Posterior vena cava (tissue), 2 donors: ENCODE measurements at regions of chr2 and their contacts with region 1.

Region 1: GRCh38 chr2:53640466-53640865 is 127.1 kb upstream of the CHAC2 start:
- DNase-seq: no peak

Region 2: DNA sequence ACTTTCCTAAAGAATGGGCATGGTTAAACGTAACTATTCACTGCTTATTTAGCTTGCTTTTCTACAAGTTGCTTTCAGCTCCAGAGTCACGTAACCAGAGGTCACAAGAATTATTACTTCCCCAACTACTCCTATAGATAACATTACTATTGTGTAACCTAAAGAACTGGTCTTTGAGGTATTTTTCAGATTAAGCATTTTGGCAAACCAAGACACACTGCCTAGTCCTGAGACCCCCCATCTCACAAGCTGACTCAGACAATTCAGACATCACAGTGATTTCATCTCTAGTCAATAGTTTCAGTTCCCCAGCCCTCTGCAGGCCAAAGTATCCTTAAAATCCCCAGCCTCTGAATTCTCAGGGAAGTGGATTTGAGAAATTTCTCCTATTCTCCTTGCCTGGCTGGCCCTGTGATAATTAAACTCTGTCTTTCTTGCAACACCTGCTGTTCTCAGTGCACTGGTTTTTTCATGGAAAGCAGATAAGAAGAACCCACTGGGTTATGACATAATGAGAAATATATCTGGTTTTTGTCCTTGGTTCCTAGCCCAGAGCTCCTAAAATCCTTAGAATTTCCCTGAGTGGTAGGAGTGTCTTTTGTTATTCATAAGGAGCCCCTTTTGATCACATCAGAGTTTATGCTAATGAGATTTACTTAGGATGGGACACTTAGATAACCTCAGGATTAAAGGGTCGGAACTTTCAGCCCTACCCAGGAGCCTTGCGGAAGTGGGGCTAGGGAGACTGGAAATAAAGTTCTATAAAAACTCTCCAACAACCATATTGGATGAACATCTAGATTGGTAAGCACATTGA is 1183.7 kb before region 1 on chr2:
- intact Hi-C with region 1: no loop called
- DNase-seq: no peak

Region 3: DNA sequence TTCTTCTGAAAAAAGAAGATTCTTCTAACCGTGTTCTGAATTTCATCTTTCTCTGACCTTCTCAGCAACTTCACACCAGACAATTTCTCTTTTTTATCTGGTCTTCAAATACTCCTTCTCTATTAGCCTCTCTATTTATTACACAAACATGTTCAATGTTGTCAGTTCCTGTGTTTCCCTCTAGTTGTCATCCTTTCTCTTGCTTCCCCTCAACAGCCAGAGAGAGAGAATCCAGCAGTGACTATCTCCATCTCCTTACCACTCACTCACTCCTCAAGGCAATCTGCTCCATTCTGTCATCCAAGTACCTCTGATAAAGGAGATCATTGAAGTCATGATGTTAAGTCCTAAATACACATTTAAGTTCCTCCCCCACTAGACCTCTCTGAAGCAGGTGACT is 364.7 kb before region 1 on chr2:
- intact Hi-C with region 1: no loop called
- DNase-seq: no peak

Region 4: DNA sequence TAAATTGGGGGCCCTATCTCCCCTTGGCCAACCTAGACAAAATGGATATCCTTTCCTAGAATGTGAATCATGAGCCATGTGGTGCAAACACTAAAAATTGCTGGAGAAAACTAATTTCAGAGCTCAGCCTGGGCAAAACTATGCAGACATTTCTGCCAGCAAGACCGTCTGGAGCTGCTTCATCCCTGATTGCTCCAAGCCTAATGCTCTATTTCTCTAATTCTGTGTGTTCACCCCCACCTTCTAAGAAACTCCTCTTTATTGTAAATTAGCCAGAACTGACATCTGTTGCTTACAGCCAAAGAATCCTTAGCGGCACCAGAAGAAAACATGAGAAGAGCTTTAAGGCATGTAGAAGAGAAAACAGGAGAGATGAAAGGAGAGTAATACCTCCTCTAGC is 210.6 kb before region 1 on chr2:
- intact Hi-C with region 1: loop called in 1 of 2 experiments (anchors 5 kb)
- DNase-seq: no peak

Region 5: DNA sequence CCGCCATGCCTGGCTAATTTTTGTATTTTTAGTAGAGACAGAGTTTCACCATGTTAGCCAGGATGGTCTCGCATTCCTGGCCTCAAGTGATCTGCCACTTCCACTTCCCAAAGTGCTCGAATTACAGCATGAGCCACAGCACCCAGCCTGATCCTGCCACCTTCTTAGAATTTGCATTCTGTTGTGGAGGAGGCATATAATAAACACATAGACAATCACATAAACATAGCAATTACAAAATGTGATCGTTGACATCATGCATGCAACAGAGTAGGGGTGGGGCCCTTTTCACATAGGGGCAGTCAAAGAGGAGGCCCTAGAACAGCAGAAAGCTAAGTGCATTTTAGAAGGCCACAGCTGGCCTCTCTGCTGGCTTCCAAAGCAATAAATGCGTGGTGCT is 655.4 kb after region 1 on chr2:
- intact Hi-C with region 1: no loop called
- DNase-seq: no peak